Caco-2 (cell line): ENCODE measurements at regions of chr1 and their contacts with region 1.

Region 1: DNA sequence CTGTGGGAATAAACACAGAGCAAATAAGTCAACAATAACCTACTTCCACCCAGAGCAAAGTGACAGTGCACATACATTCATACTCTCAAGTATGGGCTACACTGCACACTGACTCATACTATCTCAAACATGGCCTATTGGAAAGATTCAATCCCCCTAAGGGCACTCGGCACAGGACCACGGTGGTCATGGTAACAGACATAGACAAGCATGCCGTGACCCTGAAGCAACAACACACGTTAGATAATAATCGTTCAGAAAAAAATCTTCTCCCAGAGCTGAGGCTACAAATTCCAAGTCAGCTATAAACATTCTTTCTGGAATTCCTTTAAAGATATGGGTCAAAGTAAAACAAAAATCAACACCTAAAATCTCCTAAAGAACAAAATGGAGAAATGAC is 16.8 kb upstream of the JAK1 start:
- DNase-seq: peak; percentile 78 to 85
- H3K4me3 ChIP-seq: no peak overlapping the region
- H3K4me3 Mint-ChIP-seq: peak overlapping the region; percentile 45
- H3K27ac Mint-ChIP-seq: peak overlapping the region; percentile 85
- H3K4me1 ChIP-seq: peaks cover 42% of the 10 kb centered on the region
- H3K4me1 Mint-ChIP-seq: peaks cover 37% of the 10 kb centered on the region
- H3K27me3 ChIP-seq: no peaks in the 10 kb centered on the region
- H3K27me3 Mint-ChIP-seq: no peaks in the 10 kb centered on the region
- CTCF ChIP-seq: no peak

Region 2: DNA sequence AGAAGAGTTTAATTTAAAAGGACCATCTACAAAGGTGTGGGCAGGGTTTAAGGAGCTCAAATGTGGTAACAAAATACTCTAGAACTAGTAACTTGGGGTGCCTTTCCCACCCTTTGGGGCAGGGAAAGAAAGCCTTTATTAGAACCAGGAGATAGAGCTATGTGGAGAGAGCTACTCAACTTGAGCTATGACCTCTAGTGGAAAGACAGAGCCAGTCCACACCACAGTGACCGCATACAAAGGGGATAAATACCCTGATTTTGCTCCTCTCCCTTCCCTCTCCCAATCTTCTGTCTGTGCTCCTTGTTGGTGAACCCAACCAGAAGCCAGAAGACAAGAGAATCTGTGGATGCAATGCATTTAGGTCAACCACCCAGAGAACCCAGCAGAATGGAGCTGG is 37.6 kb after region 1 on chr1:
- CTCF ChIA-PET with region 1: interaction called, 4 read pairs
- POLR2A ChIA-PET with region 1: no interaction called
- intact Hi-C with region 1: loop called (anchors 1 kb)
- DNase-seq: peak in 1 of 2 experiments; percentile 13
- H3K4me3 ChIP-seq: no peak overlapping the region
- H3K4me3 Mint-ChIP-seq: no peak overlapping the region
- H3K27ac Mint-ChIP-seq: no peak overlapping the region
- H3K4me1 ChIP-seq: 0 out of 2 replicates have a peak, but pooled peaks cover 1% of the 10 kb centered on the region
- H3K4me1 Mint-ChIP-seq: no peaks in the 10 kb centered on the region
- H3K27me3 ChIP-seq: no peaks in the 10 kb centered on the region
- H3K27me3 Mint-ChIP-seq: no peaks in the 10 kb centered on the region
- CTCF ChIP-seq: peak in 1 of 2 experiments; percentile 49

Region 3: DNA sequence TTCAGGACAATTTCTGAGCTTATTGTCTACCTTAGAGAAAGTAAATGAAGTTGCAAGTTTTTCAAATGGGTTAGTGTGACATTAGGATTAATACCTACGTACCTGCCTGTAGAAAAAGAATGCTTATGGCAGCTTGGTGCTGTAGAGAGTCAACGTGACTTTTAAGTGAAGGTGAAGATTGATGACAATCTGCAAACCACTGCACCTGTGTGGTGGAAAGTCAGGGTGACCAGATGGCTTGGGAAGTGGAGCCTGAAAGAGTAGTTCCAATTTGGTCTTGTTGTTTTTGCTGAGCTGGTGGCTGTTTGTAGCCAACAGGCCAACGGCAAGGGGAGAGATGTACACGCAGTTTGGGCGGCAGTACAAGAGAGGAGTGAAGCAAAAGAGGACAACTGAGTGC is 61.2 kb after region 1 on chr1:
- CTCF ChIA-PET with region 1: no interaction called
- POLR2A ChIA-PET with region 1: no interaction called
- intact Hi-C with region 1: loop called (anchors 5 kb)
- DNase-seq: no peak
- H3K4me3 ChIP-seq: no peak overlapping the region
- H3K4me3 Mint-ChIP-seq: no peak overlapping the region
- H3K27ac Mint-ChIP-seq: no peak overlapping the region
- H3K4me1 ChIP-seq: no peaks in the 10 kb centered on the region
- H3K4me1 Mint-ChIP-seq: no peaks in the 10 kb centered on the region
- H3K27me3 ChIP-seq: no peaks in the 10 kb centered on the region
- H3K27me3 Mint-ChIP-seq: no peaks in the 10 kb centered on the region
- CTCF ChIP-seq: no peak

Region 4: DNA sequence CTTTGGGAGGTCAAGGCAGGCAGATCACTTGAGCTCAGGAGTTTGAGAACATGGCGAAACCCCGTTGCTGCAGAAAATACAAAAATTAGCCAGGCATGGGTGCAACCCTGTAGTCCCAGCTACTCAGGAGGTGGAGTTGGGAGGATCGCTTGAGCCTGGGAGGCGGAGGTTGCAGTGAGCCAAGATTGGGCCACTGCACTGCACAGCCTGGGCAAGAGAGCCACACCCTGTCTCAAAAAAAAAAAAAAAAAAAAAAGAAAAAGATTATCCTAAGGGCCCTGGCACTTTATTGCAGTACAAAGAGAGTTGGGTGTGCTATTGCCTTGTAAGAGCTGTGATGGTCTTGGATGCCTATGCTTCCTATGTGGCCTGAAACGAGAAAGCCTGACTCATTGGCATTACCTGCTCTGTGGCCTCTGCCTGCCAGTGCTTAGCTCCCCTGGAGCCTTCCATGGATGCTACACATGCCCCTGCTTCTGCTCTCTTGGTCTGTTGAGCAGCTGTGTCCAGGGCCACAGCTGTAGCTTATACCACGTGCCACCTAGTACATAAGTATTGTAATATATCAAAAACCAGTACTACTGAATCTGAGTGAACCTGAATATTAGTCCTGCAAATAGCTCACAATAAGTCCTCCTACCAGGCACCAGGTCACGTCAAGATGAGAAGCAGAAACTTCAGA is 372.0 kb after region 1 on chr1:
- CTCF ChIA-PET with region 1: no interaction called
- POLR2A ChIA-PET with region 1: no interaction called
- intact Hi-C with region 1: no loop called
- DNase-seq: no peak
- H3K4me3 ChIP-seq: no peak overlapping the region
- H3K4me3 Mint-ChIP-seq: no peak overlapping the region
- H3K27ac Mint-ChIP-seq: no peak overlapping the region
- H3K4me1 ChIP-seq: no peaks in the 10 kb centered on the region
- H3K4me1 Mint-ChIP-seq: no peaks in the 10 kb centered on the region
- H3K27me3 ChIP-seq: no peaks in the 10 kb centered on the region
- H3K27me3 Mint-ChIP-seq: no peaks in the 10 kb centered on the region
- CTCF ChIP-seq: no peak